PC-9 (cell line): ENCODE measurements at regions of chr14 and their contacts with region 1.

Region 1: GRCh38 chr14:30005114-30005808 is 77.6 kb upstream of the PRKD1 start:
- DNase-seq: no peak
- H3K4me3 ChIP-seq: no peak overlapping the region
- H3K27ac ChIP-seq: no peak overlapping the region
- H3K4me1 ChIP-seq: no peaks in the 10 kb centered on the region
- H3K27me3 ChIP-seq: no peaks in the 10 kb centered on the region
- CTCF ChIP-seq: peak; percentile 72

Region 2: DNA sequence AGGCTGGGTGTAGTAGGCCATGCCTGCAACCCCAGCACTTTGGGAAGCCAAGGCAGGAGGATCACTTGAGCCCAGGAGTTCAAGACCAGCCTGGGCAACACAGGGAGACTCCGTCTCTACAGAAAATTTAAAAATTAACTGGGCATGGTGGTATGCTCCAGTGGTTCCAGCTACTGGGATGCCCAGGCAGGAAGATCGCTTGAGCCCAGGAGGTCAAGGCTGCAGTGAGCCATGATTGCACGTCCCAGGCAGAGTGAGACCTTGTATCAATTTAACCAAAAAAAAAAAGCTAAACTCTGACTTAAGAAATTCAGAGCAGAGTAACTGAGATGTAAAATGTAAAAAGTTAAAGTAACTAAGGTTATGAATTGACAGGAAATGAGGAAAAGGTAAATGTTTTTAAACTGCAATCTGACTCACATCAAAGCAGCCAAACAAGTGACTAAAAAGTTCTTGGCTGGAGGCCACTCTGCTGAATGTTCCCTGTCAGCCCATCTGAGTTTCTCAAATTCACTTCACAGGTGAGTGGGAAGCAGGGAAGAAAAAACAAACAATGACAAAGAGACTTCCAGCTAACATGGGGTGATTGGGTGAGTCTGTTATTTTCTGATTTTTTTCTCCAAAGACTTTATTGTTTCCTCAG is 98.9 kb before region 1 on chr14:
- CTCF ChIA-PET with region 1: interaction called, 10 read pairs
- POLR2A ChIA-PET with region 1: no interaction called
- intact Hi-C with region 1: no loop called
- DNase-seq: peak; percentile 25 to 65
- H3K4me3 ChIP-seq: no peak overlapping the region
- H3K27ac ChIP-seq: no peak overlapping the region
- H3K4me1 ChIP-seq: peaks cover 13% of the 10 kb centered on the region
- H3K27me3 ChIP-seq: no peaks in the 10 kb centered on the region
- CTCF ChIP-seq: no peak

Region 3: DNA sequence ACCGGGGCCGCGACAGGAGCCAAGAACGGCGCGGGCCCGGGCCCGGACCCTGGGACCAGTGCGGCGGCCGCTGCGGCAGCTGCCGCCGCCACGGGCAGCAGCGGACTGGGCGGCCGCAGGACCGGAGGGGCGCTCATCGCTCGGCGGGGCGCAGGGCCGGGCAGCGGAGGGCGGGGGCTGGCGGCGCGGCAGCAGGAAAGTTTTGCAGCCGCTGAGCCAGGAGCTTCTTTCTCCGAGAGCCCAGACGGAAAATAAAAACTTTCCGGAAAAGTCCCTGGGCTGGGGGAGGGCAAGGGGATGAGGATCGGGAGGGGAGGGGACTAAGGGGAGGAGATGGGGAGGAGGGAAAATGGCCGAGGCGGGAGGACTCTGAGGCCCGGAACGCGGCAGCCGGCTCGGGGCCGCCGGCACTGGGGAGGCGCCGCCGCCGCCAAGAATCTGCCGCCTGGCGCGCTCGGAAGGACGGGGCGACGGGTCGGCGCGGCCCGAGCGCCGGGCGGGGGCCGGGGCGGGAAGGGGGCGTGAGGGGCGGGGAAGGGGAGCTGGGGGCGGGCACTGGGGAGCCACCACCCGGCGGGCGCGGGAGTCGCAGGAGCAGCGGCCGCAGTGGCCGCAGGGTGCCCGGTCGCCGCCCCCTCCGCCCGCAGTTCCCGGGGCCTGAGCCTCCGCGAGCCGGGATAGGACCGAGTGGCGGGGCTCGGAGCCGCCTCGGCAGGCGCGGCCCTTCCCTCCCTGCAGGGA is 77.7 kb before region 1 on chr14 and contains the start of gene PRKD1:
- CTCF ChIA-PET with region 1: no interaction called
- POLR2A ChIA-PET with region 1: no interaction called
- intact Hi-C with region 1: no loop called
- DNase-seq: peak in 1 of 2 experiments; percentile 3
- H3K4me3 ChIP-seq: peak within 1 kb of the TSS; percentile 59
- H3K27ac ChIP-seq: no peak within 1 kb of the TSS
- H3K4me1 ChIP-seq: peaks cover 10% of the 10 kb centered on the region
- H3K27me3 ChIP-seq: no peaks in the 10 kb centered on the region
- CTCF ChIP-seq: no peak
- total RNA-seq, gene PRKD1: 0.78 and 0.98 TPM in 2 replicates

Region 4: DNA sequence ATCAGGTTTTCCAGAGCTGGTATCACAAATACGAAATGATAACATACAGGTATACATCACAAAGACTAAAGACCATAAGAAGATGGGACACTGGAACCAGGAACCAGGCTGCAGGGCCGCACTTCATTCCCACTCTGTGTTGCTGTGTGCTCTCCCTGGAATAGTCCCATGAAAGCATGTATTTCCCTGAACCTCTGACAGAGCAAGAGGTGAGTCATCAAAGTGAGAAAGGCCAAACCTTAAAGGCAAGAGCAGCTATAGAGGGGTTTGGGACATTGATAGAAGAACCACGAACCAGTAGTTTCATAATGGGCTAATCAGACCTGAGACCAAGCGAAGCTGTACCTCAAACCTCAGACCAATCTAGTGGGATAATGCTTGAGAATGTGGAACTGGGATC is 205.4 kb after region 1 on chr14:
- CTCF ChIA-PET with region 1: no interaction called
- POLR2A ChIA-PET with region 1: no interaction called
- intact Hi-C with region 1: no loop called
- DNase-seq: no peak
- H3K4me3 ChIP-seq: no peak overlapping the region
- H3K27ac ChIP-seq: no peak overlapping the region
- H3K4me1 ChIP-seq: no peaks in the 10 kb centered on the region
- H3K27me3 ChIP-seq: no peaks in the 10 kb centered on the region
- CTCF ChIP-seq: no peak